ENCODE measurements at regions of chr3 and their contacts with region 1.

Region 1: GRCh38 chr3:127556565-127556964 is 34.0 kb downstream of the TPRA1 start:
- DNase-seq: peak; percentile 62
- ATAC-seq: peak; percentile 82
- H3K4me3 Mint-ChIP-seq: no peak overlapping the region
- H3K27ac Mint-ChIP-seq: no peak overlapping the region
- H3K4me1 Mint-ChIP-seq: peaks cover 4% of the 10 kb centered on the region
- H3K27me3 Mint-ChIP-seq: no peaks in the 10 kb centered on the region; the same call in 1 of the 2 replicates
- CTCF ChIP-seq: no peak

Region 2: DNA sequence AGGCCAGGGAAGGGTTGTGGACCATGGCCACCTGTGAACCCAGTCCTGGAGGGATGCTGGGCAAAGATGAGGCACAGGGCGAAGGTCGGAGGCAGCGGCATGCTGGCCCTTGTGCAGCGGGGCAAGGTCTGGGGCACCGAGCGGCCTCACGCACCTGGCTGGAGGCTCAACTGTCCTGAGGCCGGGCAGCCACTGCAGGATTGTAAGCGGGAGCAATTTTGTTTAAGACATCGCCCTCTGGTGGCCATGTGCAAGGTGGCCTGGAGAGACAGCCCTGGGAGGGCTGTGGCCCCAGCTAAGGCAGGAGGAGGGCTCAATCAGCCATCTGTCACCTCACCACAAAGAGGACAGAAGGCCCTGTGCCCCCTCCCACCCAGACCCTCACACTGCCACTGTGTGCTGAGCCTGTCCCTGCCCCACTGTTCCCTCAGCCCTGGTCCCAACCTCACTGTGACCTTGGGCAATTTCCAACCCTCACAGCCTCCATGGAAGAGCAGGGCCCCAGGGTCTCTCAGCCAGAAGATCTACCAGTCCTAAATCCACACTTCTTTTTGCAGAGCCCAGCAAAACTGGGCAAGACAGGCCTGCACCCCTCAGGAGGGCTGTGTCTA is 12.3 kb before region 1 on chr3:
- CTCF ChIA-PET with region 1: interaction called, 13 read pairs
- POLR2A ChIA-PET with region 1: no interaction called
- DNase-seq: peak; percentile 87
- ATAC-seq: peak; percentile 59
- H3K4me3 Mint-ChIP-seq: no peak overlapping the region
- H3K27ac Mint-ChIP-seq: no peak overlapping the region
- H3K4me1 Mint-ChIP-seq: peaks cover 16% of the 10 kb centered on the region
- H3K27me3 Mint-ChIP-seq: peaks cover 8% of the 10 kb centered on the region; the same call in 1 of the 2 replicates
- CTCF ChIP-seq: peak; percentile 83

Measured in WTC11 (cell line).